Esophagus muscularis mucosa (tissue), 4 donors: ENCODE measurements at regions of chr3 and their contacts with region 1.

Region 1: GRCh38 chr3:144308396-144308795 is 336.8 kb downstream of the DIPK2A start:
- DNase-seq: no peak
- H3K4me3 ChIP-seq: no peak overlapping the region
- H3K27ac ChIP-seq: no peak overlapping the region
- H3K4me1 ChIP-seq: no peaks in the 10 kb centered on the region
- H3K27me3 ChIP-seq: no peaks in the 10 kb centered on the region
- CTCF ChIP-seq: no peak
- EP300 ChIP-seq: no peak
- POLR2A ChIP-seq: no peak

Region 2: DNA sequence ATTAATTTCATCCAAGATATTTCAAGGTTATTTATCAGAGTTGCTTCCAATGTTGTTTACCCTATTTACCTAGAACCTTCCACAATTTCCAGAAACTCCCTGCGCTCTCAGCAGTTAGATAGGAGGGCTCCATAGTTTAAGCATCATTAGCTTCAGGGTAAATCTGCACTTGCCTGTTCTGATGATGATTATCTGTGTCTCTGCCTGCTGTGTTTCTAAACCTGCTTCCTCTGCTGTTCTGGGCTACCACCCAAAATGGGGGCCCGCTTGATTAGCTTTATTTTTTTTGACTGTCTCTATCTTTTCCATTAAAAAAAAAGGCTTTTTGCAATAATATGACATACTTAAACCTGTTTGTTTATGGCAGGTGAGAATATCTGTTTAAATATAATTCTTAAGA is 135.7 kb after region 1 on chr3:
- intact Hi-C with region 1: loop called (anchors 10 kb)
- DNase-seq: no peak
- H3K4me3 ChIP-seq: no peak overlapping the region
- H3K27ac ChIP-seq: no peak overlapping the region
- H3K4me1 ChIP-seq: no peaks in the 10 kb centered on the region
- H3K27me3 ChIP-seq: no peaks in the 10 kb centered on the region
- CTCF ChIP-seq: no peak
- EP300 ChIP-seq: no peak
- POLR2A ChIP-seq: no peak